ENCODE measurements at regions of chr14 and their contacts with region 1.

Region 1: GRCh38 chr14:67359775-67360648 is at the starts of genes ATP6V1D and EIF2S1:
- DNase-seq: peak; percentile 94
- ATAC-seq: peak; percentile 95
- H3K4me3 ChIP-seq: peak within 1 kb of the TSS; percentile 72 to 89
- H3K27ac ChIP-seq: peak within 1 kb of the TSS; percentile 99
- H3K4me1 ChIP-seq: peaks cover 31% of the 10 kb centered on the region
- H3K27me3 ChIP-seq: no peaks in the 10 kb centered on the region
- CTCF ChIP-seq: peak; percentile 90
- total RNA-seq, gene ATP6V1D: 68.6 TPM
- total RNA-seq, gene EIF2S1: 116 TPM

Region 2: GRCh38 chr14:66859063-66859671 is 500.8 kb before region 1 on chr14:
- CTCF ChIA-PET with region 1: no interaction called
- POLR2A ChIA-PET with region 1: no interaction called
- in situ Hi-C with region 1: no loop called
- intact Hi-C with region 1: no loop called
- DNase-seq: no peak
- ATAC-seq: no peak
- H3K4me3 ChIP-seq: no peak overlapping the region
- H3K27ac ChIP-seq: no peak overlapping the region
- H3K4me1 ChIP-seq: no peaks in the 10 kb centered on the region
- H3K27me3 ChIP-seq: no peaks in the 10 kb centered on the region
- CTCF ChIP-seq: no peak

Region 3: GRCh38 chr14:67167420-67168109 is 192.4 kb before region 1 on chr14:
- CTCF ChIA-PET with region 1: no interaction called
- POLR2A ChIA-PET with region 1: no interaction called
- in situ Hi-C with region 1: no loop called
- intact Hi-C with region 1: no loop called
- DNase-seq: no peak
- ATAC-seq: no peak
- H3K4me3 ChIP-seq: no peak overlapping the region
- H3K27ac ChIP-seq: peak overlapping the region; percentile 86
- H3K4me1 ChIP-seq: peaks cover 23% of the 10 kb centered on the region
- H3K27me3 ChIP-seq: no peaks in the 10 kb centered on the region
- CTCF ChIP-seq: no peak

Region 4: GRCh38 chr14:67377916-67378315 is 17.9 kb after region 1 on chr14:
- CTCF ChIA-PET with region 1: no interaction called
- POLR2A ChIA-PET with region 1: interaction called, 11 read pairs
- in situ Hi-C with region 1: no loop called
- intact Hi-C with region 1: no loop called
- DNase-seq: no peak
- ATAC-seq: no peak
- H3K4me3 ChIP-seq: no peak overlapping the region
- H3K27ac ChIP-seq: no peak overlapping the region
- H3K4me1 ChIP-seq: no peaks in the 10 kb centered on the region
- H3K27me3 ChIP-seq: no peaks in the 10 kb centered on the region
- CTCF ChIP-seq: no peak

Measured in Panc1 (cell line).